Adrenal gland (tissue), 19 donors: ENCODE measurements at regions of chr2 and their contacts with region 1.

Region 1: GRCh38 chr2:223797811-223798721 is 39.3 kb downstream of the AP1S3 start:
- DNase-seq: peak in 2 of 7 donors; percentile 14 to 18
- H3K4me3 ChIP-seq: no peak overlapping the region
- H3K27ac ChIP-seq: no peak overlapping the region
- H3K4me1 ChIP-seq: no peaks in the 10 kb centered on the region
- H3K27me3 ChIP-seq: no peaks in the 10 kb centered on the region
- CTCF ChIP-seq: peak in 5 of 6 experiments; percentile 58 to 79 (median 71)
- POLR2A ChIP-seq: no peak

Region 2: GRCh38 chr2:222976521-222977076 is 821.5 kb before region 1 on chr2:
- intact Hi-C with region 1: loop called in 1 of 2 experiments (anchors 10 kb)
- DNase-seq: no peak
- H3K4me3 ChIP-seq: no peak overlapping the region
- H3K27ac ChIP-seq: no peak overlapping the region
- H3K4me1 ChIP-seq: no peaks in the 10 kb centered on the region
- H3K27me3 ChIP-seq: no peaks in the 10 kb centered on the region
- CTCF ChIP-seq: no peak
- POLR2A ChIP-seq: no peak

Region 3: GRCh38 chr2:223641097-223641496 is 157.0 kb before region 1 on chr2:
- intact Hi-C with region 1: no loop called
- DNase-seq: no peak
- H3K4me3 ChIP-seq: no peak overlapping the region
- H3K27ac ChIP-seq: no peak overlapping the region
- H3K4me1 ChIP-seq: no peaks in the 10 kb centered on the region
- H3K27me3 ChIP-seq: no peaks in the 10 kb centered on the region
- CTCF ChIP-seq: no peak
- POLR2A ChIP-seq: no peak

Region 4: DNA sequence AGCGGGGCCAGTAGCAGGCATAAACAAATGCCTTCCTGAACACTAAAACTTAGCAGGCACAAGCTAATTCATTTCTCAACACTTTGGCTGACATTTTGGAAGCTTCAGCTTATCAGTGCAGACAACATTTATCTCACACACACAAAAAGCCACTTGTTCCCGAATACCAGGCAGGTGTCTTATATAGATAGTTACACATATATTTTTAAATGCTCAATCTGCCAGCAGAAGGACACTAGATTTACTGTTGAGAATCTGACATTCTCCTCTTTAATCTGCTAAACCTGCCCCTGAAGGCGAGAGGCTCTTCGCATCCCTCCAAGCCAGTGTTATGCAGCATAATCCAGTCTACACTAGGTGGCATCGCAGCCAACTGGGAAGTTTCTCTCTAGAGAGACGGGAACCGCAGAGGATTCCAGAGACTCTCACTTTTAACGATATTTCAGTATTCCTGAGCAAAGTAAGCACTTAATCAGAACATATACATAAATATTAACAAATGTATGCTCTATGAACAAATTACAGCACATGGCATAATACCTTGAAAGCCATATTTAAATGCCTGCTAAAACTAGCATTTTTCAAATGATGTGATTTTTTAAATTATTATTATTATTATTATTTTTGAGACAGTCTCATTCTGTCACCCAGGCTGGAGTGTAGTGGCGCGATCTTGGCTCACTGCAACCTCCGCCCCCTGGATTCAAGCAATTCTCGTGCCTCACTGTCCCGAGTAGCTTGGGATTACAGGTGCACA is 105.7 kb before region 1 on chr2:
- intact Hi-C with region 1: loop called in 1 of 2 experiments (anchors 10 kb)
- DNase-seq: peak; percentile 26 to 72 (median 53)
- H3K4me3 ChIP-seq: no peak overlapping the region
- H3K27ac ChIP-seq: no peak overlapping the region
- H3K4me1 ChIP-seq: no peaks in the 10 kb centered on the region
- H3K27me3 ChIP-seq: no peaks in the 10 kb centered on the region
- CTCF ChIP-seq: peak; percentile 43 to 68 (median 56)
- POLR2A ChIP-seq: no peak